ENCODE measurements at regions of chr12 and their contacts with region 1.

Region 1: DNA sequence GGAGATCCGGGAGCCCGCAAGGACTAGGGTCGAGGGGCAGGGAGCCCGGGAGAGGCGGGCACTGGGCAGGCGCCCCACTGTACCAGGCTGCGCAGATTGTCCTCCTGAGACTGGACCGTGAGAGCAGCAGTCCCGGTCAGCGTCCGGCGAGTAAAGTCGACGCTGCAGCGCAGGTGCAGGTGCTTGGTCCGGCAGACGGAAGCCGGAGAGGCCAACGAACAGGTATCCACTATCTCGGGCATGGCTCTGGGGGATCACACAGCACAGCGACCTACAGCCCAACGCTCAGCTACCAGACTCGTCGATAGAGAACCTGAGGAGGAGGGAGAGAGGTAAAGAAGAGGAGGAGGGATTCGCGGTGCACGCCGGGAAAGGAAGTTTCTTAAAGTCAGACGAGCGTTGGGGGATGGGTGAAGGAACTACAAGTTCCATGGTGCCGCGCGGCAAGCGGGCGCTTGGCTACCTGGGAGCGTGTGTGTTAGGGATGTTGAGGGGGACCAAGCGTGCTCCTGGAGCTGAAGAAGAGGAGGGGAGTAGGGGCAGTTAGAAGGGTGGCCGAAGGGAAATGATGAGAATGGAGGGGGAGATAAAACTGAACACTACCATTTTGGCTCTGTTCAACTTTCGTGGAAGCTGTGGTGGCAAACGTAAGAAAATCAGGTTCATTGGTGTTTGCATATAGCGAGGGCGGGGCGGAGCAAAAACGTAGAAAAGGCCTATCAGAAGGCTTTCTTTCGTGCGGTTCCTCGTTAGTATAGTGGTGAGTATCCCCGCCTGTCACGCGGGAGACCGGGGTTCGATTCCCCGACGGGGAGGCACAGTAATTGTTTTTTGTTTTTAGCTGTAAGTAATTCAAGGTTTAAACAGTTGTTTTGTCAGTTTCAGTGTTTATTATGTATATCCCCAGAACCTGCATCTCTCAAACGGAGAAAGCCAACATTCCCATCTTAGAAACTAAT is at the start of gene LTA4H:
- DNase-seq: peak; percentile 93 to 95
- H3K4me3 ChIP-seq: peak within 1 kb of the TSS; percentile 86
- H3K27ac ChIP-seq: peak within 1 kb of the TSS; percentile 77
- H3K4me1 ChIP-seq: peaks cover 27% of the 10 kb centered on the region
- H3K27me3 ChIP-seq: no peaks in the 10 kb centered on the region
- CTCF ChIP-seq: no peak
- total RNA-seq, gene LTA4H: 115 and 118 TPM in 2 replicates

Region 2: DNA sequence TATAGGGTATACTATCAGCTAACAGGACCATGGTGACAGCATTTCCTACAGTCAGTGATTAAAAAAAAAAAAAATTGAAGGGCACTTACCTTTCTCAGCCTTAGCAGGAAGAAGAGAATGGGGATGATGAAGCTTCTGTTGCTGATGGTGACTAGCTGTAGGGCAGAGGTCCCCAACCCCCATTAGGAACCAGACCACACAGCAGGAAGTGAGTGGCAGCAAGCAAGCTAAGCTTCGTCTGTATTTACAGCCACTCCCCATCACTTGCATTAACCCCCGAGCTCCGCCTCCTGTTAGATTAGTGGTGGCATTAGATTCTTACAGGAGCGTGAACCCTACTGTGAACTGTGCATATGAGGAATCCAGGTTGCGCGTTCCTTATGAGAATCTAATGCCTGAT is 393.0 kb before region 1 on chr12:
- CTCF ChIA-PET with region 1: interaction called, 12 read pairs
- POLR2A ChIA-PET with region 1: no interaction called
- intact Hi-C with region 1: no loop called
- DNase-seq: peak; percentile 12 to 59
- H3K4me3 ChIP-seq: no peak overlapping the region
- H3K27ac ChIP-seq: no peak overlapping the region
- H3K4me1 ChIP-seq: peaks cover 24% of the 10 kb centered on the region
- H3K27me3 ChIP-seq: no peaks in the 10 kb centered on the region
- CTCF ChIP-seq: no peak

Region 3: GRCh38 chr12:96047229-96048211 is 12.0 kb after region 1 on chr12:
- CTCF ChIA-PET with region 1: interaction called, 13 read pairs
- POLR2A ChIA-PET with region 1: interaction called, 9 read pairs
- intact Hi-C with region 1: no loop called
- DNase-seq: peak; percentile 37 to 100
- H3K4me3 ChIP-seq: peak overlapping the region; percentile 49; the same call in 1 of the 2 replicates
- H3K27ac ChIP-seq: peak overlapping the region; percentile 99
- H3K4me1 ChIP-seq: peaks cover 69% of the 10 kb centered on the region
- H3K27me3 ChIP-seq: no peaks in the 10 kb centered on the region
- CTCF ChIP-seq: no peak